ENCODE measurements at regions of chr2 and their contacts with region 1.

Region 1: GRCh38 chr2:136117909-136118818 is at the start of gene CXCR4:
- DNase-seq: peak; percentile 94
- ATAC-seq: peak; percentile 25
- H3K4me3 Mint-ChIP-seq: peak within 1 kb of the TSS; percentile 98
- H3K27ac Mint-ChIP-seq: peak within 1 kb of the TSS; percentile 99
- H3K4me1 Mint-ChIP-seq: peaks cover 50% of the 10 kb centered on the region
- H3K27me3 Mint-ChIP-seq: no peaks in the 10 kb centered on the region
- total RNA-seq, gene CXCR4: 288 to 293 TPM

Region 2: GRCh38 chr2:135792401-135793150 is 325.6 kb before region 1 on chr2:
- POLR2A ChIA-PET with region 1: no interaction called
- DNase-seq: no peak
- ATAC-seq: peak; percentile 38
- H3K4me3 Mint-ChIP-seq: no peak overlapping the region
- H3K27ac Mint-ChIP-seq: peak overlapping the region; percentile 8
- H3K4me1 Mint-ChIP-seq: peaks cover 26% of the 10 kb centered on the region
- H3K27me3 Mint-ChIP-seq: no peaks in the 10 kb centered on the region

Region 3: DNA sequence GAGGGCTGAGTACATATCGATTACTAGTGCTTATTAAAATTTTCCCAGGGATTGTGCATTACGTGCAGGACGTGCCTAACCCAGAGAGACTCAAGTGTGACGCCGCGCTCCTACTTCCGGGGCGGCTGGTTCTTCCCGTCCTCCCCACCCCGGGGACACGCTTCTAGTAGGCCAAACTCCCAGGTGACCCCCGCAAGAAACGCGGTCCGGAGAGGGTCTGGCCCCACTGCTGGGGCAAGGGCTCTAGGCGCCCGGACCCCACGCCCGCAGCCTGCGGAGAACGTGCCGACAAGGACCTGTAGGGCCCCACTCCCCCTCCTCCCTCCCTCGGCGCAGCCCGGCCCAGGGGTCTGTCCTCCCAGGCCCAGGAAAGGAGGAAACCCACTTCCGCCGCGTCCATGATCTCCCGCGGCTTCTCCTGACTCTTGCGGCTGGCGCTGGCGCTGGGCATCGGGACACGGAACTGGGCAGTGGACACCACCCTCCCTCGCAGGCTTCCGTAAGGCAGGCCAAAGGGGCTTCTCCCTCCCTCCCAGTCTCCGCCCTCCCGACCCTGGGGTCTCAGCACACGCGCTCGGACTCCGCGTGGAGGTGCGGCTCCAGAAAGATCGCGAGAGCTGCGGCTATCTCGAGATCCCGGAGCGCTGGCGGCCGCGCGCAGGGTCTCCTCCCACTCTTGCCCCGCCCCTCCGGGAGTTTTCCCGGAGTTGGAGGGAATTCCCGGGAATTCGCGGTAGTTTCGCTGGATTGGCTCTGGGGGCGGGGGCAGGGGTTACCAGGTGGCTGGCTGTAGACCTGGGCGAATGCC is 132.9 kb before region 1 on chr2 and contains the start of gene DARS1:
- POLR2A ChIA-PET with region 1: interaction called, 14 read pairs
- DNase-seq: peak; percentile 89
- ATAC-seq: peak; percentile 85
- H3K4me3 Mint-ChIP-seq: peak within 1 kb of the TSS; percentile 88
- H3K27ac Mint-ChIP-seq: peak within 1 kb of the TSS; percentile 98
- H3K4me1 Mint-ChIP-seq: peaks cover 30% of the 10 kb centered on the region
- H3K27me3 Mint-ChIP-seq: no peaks in the 10 kb centered on the region
- total RNA-seq, gene DARS1: 117 to 118 TPM

Region 4: GRCh38 chr2:136052369-136053362 is 65.5 kb before region 1 on chr2:
- POLR2A ChIA-PET with region 1: interaction called, 38 read pairs
- DNase-seq: no peak
- ATAC-seq: no peak
- H3K4me3 Mint-ChIP-seq: peak overlapping the region; percentile 63
- H3K27ac Mint-ChIP-seq: peak overlapping the region; percentile 94
- H3K4me1 Mint-ChIP-seq: peaks cover 78% of the 10 kb centered on the region
- H3K27me3 Mint-ChIP-seq: no peaks in the 10 kb centered on the region

Region 5: GRCh38 chr2:136135921-136136906 is 18.1 kb after region 1 on chr2:
- POLR2A ChIA-PET with region 1: interaction called, 92 read pairs
- DNase-seq: peak; percentile 56
- ATAC-seq: peak; percentile 76
- H3K4me3 Mint-ChIP-seq: peak overlapping the region; percentile 47
- H3K27ac Mint-ChIP-seq: peak overlapping the region; percentile 89
- H3K4me1 Mint-ChIP-seq: peaks cover 75% of the 10 kb centered on the region
- H3K27me3 Mint-ChIP-seq: peaks cover 7% of the 10 kb centered on the region

Region 6: GRCh38 chr2:136381722-136382633 is 263.8 kb after region 1 on chr2:
- POLR2A ChIA-PET with region 1: interaction called, 11 read pairs
- DNase-seq: peak; percentile 68
- ATAC-seq: peak; percentile 83
- H3K4me3 Mint-ChIP-seq: peak overlapping the region; percentile 73
- H3K27ac Mint-ChIP-seq: peak overlapping the region; percentile 96
- H3K4me1 Mint-ChIP-seq: peaks cover 57% of the 10 kb centered on the region
- H3K27me3 Mint-ChIP-seq: no peaks in the 10 kb centered on the region

Measured in activated naive CD8-positive, alpha-beta T cell treated with anti-CD3 and anti-CD28 coated beads, Interleukin-2, amount 10 ng/mL, durations not matched to agents 7 days and 5 days (primary cell).